ENCODE measurements at regions of chr19 and their contacts with region 1.

Region 1: GRCh38 chr19:29610563-29611271 is 4.6 kb downstream of the POP4 start:
- DNase-seq: peak; percentile 66 to 87 (median 80)
- ATAC-seq: peak; percentile 54 to 80 (median 78)
- H3K4me3 ChIP-seq: no peak overlapping the region
- H3K27ac ChIP-seq: no peak overlapping the region
- H3K4me1 ChIP-seq: peaks cover 0 to 9% (median 0%) of the 10 kb centered on the region in 3 donors
- H3K27me3 ChIP-seq: no peaks in the 10 kb centered on the region
- CTCF ChIP-seq: peak; percentile 73 to 88 (median 85)

Region 2: GRCh38 chr19:29665215-29665825 is 54.6 kb after region 1 on chr19 and contains the start of gene PLEKHF1:
- intact Hi-C with region 1: loop called in 2 of 3 experiments (anchors 10 kb)
- DNase-seq: peak; percentile 84 to 98 (median 92)
- ATAC-seq: peak; percentile 87 to 95 (median 94)
- H3K4me3 ChIP-seq: peak within 1 kb of the TSS; percentile 63 to 95 (median 86)
- H3K27ac ChIP-seq: peak within 1 kb of the TSS; percentile 26 to 86 (median 72)
- H3K4me1 ChIP-seq: peaks cover 21 to 40% (median 23%) of the 10 kb centered on the region in 3 donors
- H3K27me3 ChIP-seq: no peaks in the 10 kb centered on the region
- CTCF ChIP-seq: no peak
- total RNA-seq, gene PLEKHF1: 2.1 to 8.4 (median 3.7) TPM

Region 3: GRCh38 chr19:29671393-29672160 is 60.9 kb after region 1 on chr19:
- intact Hi-C with region 1: loop called in 2 of 3 experiments (anchors 10 kb)
- DNase-seq: peak in 1 of 6 donors; percentile 77
- ATAC-seq: peak; percentile 32 to 75 (median 62)
- H3K4me3 ChIP-seq: no peak overlapping the region
- H3K27ac ChIP-seq: peak overlapping the region in 2 of 4 donors; percentile 19 to 22
- H3K4me1 ChIP-seq: peaks cover 0 to 14% (median 0%) of the 10 kb centered on the region in 3 donors
- H3K27me3 ChIP-seq: no peaks in the 10 kb centered on the region
- CTCF ChIP-seq: peak in 1 of 4 donors; percentile 7

Region 4: GRCh38 chr19:29714953-29715700 is 104.4 kb after region 1 on chr19 and contains the start of gene C19orf12:
- intact Hi-C with region 1: loop called in 2 of 3 experiments (anchors 5 kb)
- DNase-seq: peak; percentile 61 to 89 (median 80)
- ATAC-seq: peak; percentile 81 to 89 (median 88)
- H3K4me3 ChIP-seq: peak within 1 kb of the TSS; percentile 87 to 96 (median 91)
- H3K27ac ChIP-seq: peak within 1 kb of the TSS; percentile 92 to 95 (median 93)
- H3K4me1 ChIP-seq: peaks cover 7 to 18% (median 12%) of the 10 kb centered on the region in 3 donors
- H3K27me3 ChIP-seq: no peaks in the 10 kb centered on the region
- CTCF ChIP-seq: no peak
- total RNA-seq, gene C19orf12: 11.0 to 16.9 (median 12.9) TPM

Measured in pancreas (tissue), 10 donors.